Activated CD8-positive, alpha-beta memory T cell treated with anti-CD3 and anti-CD28 coated beads, Interleukin-2, amount 10 ng/mL, durations not matched to agents 7 days and 5 days (primary cell): ENCODE measurements at regions of chr2 and their contacts with region 1.

Region 1: GRCh38 chr2:60550178-60550983 is 3.1 kb downstream of the BCL11A start:
- DNase-seq: peak; percentile 64
- ATAC-seq: peak; percentile 46
- H3K4me3 Mint-ChIP-seq: peak overlapping the region; percentile 75
- H3K27ac Mint-ChIP-seq: no peak overlapping the region
- H3K4me1 Mint-ChIP-seq: peaks cover 26% of the 10 kb centered on the region
- H3K27me3 Mint-ChIP-seq: peaks cover 90% of the 10 kb centered on the region

Region 2: DNA sequence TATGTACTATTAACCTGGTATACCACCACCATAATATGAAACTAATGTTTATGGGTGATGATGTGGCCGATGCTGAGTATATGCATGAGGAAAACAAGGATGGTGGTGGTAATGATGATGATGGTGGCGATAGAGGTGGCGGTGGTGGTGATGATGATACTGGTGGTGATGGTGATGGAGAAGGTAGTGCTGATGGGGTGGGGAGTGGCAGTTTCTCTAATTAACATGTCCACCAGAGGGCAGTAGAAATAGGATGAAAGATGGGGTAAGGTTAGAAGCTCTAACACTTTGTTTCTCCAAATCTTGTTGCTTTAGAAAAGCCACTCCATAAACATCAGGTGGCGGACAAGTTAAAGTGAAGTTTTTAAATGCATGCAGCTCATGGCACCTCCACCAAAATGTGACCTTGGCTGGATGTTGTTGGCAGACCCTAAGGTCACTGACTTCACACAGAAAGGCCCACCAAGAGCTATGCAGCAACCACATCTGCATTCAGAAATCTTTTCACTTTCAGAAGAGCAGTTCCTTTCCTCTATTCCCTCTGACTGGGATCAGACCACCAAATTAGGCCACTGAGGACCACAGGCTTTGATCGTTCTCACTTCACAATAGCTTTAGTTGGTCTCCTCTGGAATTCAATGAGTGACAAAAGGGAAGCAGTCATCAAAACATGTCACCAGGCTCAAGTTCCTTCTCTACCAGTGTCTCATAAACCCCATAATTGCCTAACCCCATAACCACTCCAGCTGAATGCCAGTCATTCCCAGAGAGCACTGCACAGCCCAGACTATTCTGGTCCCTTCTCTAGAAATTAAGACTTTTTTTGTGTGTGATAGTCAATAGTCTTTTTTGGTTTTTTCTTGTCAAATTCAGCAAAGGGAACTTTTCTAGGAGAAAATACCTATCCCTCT is 10.6 kb after region 1 on chr2:
- CTCF ChIA-PET with region 1: interaction called, 10 read pairs
- DNase-seq: no peak
- ATAC-seq: peak; percentile 70
- H3K4me3 Mint-ChIP-seq: no peak overlapping the region
- H3K27ac Mint-ChIP-seq: no peak overlapping the region
- H3K4me1 Mint-ChIP-seq: peaks cover 7% of the 10 kb centered on the region
- H3K27me3 Mint-ChIP-seq: peaks cover 73% of the 10 kb centered on the region

Region 3: GRCh38 chr2:60745761-60746160 is 195.4 kb after region 1 on chr2:
- CTCF ChIA-PET with region 1: no interaction called
- DNase-seq: peak; percentile 68
- ATAC-seq: peak; percentile 81
- H3K4me3 Mint-ChIP-seq: peak overlapping the region; percentile 21
- H3K27ac Mint-ChIP-seq: peak overlapping the region; percentile 50
- H3K4me1 Mint-ChIP-seq: peaks cover 17% of the 10 kb centered on the region
- H3K27me3 Mint-ChIP-seq: peaks cover 3% of the 10 kb centered on the region